ENCODE measurements at regions of chr7 and their contacts with region 1.

Region 1: DNA sequence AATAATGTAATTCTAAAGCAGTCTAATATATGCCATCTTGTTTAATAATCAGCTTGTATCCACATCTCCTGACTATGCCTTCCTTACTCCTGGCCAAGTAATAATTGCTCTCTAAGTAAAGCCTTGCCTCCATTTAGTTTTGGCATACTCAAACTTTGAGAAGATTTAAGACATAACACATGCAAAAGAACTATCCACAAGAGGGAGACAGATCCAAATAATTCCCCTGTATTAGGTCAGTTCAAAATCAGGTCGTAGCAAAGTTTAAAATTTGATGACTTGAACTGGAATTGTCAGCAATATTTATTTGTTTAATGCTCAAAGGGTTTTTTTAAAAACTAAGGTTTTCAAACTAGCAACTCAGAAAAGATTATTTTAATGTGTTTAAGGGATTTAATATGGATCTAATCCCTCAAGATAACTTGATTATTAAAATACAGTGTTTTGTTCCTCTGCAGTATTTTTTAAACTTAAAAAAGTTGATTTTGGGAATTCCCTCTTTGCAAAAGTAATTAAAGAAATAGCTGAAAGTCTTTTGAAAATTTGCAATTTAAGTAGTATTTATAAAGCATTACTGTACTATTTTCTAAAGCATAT is 95.3 kb downstream of the HDAC9 start:
- DNase-seq: peak; percentile 59
- H3K4me3 ChIP-seq: no peak overlapping the region
- H3K27ac ChIP-seq: no peak overlapping the region
- H3K4me1 ChIP-seq: no peaks in the 10 kb centered on the region
- H3K27me3 ChIP-seq: no peaks in the 10 kb centered on the region
- CTCF ChIP-seq: peak; percentile 30 to 38
- POLR2A ChIP-seq: no peak

Region 2: GRCh38 chr7:18508443-18509427 is 82.1 kb before region 1 on chr7:
- CTCF ChIA-PET with region 1: no interaction called
- POLR2A ChIA-PET with region 1: no interaction called
- dilution Hi-C with region 1: no loop called
- intact Hi-C with region 1: no loop called
- DNase-seq: peak; percentile 93
- H3K4me3 ChIP-seq: peak overlapping the region in 1 of 3 experiments; percentile 64
- H3K27ac ChIP-seq: peak overlapping the region; percentile 94
- H3K4me1 ChIP-seq: peaks cover 31% of the 10 kb centered on the region
- H3K27me3 ChIP-seq: no peaks in the 10 kb centered on the region
- CTCF ChIP-seq: no peak
- POLR2A ChIP-seq: no peak

Region 3: GRCh38 chr7:18610331-18610948 is 19.6 kb after region 1 on chr7:
- CTCF ChIA-PET with region 1: interaction called, 16 read pairs
- POLR2A ChIA-PET with region 1: no interaction called
- dilution Hi-C with region 1: no loop called
- intact Hi-C with region 1: no loop called
- DNase-seq: peak; percentile 38
- H3K4me3 ChIP-seq: no peak overlapping the region
- H3K27ac ChIP-seq: no peak overlapping the region
- H3K4me1 ChIP-seq: no peaks in the 10 kb centered on the region
- H3K27me3 ChIP-seq: no peaks in the 10 kb centered on the region
- CTCF ChIP-seq: peak; percentile 52 to 66
- POLR2A ChIP-seq: no peak

Region 4: GRCh38 chr7:18680576-18680975 is 89.7 kb after region 1 on chr7:
- CTCF ChIA-PET with region 1: no interaction called
- POLR2A ChIA-PET with region 1: no interaction called
- dilution Hi-C with region 1: no loop called
- intact Hi-C with region 1: no loop called
- DNase-seq: no peak
- H3K4me3 ChIP-seq: no peak overlapping the region
- H3K27ac ChIP-seq: no peak overlapping the region
- H3K4me1 ChIP-seq: no peaks in the 10 kb centered on the region
- H3K27me3 ChIP-seq: peaks cover 0 to 1% of the 10 kb centered on the region in 2 experiments
- CTCF ChIP-seq: no peak
- POLR2A ChIP-seq: no peak

Region 5: GRCh38 chr7:18693406-18693805 is 102.6 kb after region 1 on chr7:
- CTCF ChIA-PET with region 1: no interaction called
- POLR2A ChIA-PET with region 1: no interaction called
- dilution Hi-C with region 1: no loop called
- intact Hi-C with region 1: no loop called
- DNase-seq: peak; percentile 64
- H3K4me3 ChIP-seq: no peak overlapping the region
- H3K27ac ChIP-seq: no peak overlapping the region
- H3K4me1 ChIP-seq: no peaks in the 10 kb centered on the region
- H3K27me3 ChIP-seq: no peaks in the 10 kb centered on the region
- CTCF ChIP-seq: peak; percentile 34 to 59
- POLR2A ChIP-seq: no peak

Region 6: GRCh38 chr7:19051767-19052375 is 461.0 kb after region 1 on chr7:
- CTCF ChIA-PET with region 1: interaction called, 11 read pairs
- POLR2A ChIA-PET with region 1: no interaction called
- dilution Hi-C with region 1: no loop called
- intact Hi-C with region 1: loop called (anchors 1 kb)
- DNase-seq: peak; percentile 42
- H3K4me3 ChIP-seq: no peak overlapping the region
- H3K27ac ChIP-seq: no peak overlapping the region
- H3K4me1 ChIP-seq: no peaks in the 10 kb centered on the region
- H3K27me3 ChIP-seq: no peaks in the 10 kb centered on the region
- CTCF ChIP-seq: peak; percentile 63 to 66
- POLR2A ChIP-seq: no peak

Region 7: DNA sequence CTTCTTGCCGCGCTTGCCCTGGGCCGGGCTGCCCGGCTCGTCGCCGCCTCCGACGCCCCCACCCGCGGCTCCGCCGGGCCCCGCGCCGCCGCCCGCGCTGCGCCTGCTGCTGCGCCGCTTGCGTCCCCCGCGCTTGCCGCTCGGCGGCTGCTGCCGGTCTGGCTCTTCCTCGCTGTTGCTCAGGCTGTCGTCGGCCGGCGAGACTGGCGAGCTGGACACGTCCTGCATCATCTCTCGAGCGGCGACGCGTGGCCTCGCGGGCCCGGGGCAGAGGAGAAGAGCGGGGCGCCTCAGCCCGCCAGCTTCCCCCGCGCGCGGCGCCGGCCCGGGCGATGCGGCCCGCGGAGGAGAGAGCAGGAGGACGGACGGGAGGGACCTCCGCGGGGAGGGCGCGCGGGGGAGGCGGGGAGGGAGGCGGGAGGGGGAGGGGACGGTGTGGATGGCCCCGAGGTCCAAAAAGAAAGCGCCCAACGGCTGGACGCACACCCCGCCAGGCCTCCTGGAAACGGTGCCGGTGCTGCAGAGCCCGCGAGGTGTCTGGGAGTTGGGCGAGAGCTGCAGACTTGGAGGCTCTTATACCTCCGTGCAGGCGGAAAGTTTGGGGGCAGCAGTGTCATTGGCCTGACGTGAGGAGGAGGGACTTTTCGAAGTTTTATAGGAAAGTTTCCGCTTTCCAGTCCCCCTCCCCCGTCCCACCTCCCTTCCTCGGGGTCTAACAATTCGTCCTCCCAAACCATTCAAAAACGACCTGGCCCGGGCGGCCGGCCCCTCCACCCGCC is 526.4 kb after region 1 on chr7 and contains the start of gene TWIST1:
- CTCF ChIA-PET with region 1: interaction called, 12 read pairs
- POLR2A ChIA-PET with region 1: no interaction called
- dilution Hi-C with region 1: no loop called
- intact Hi-C with region 1: loop called (anchors 5 kb)
- DNase-seq: no peak
- H3K4me3 ChIP-seq: peak within 1 kb of the TSS in 2 of 3 experiments; percentile 22 to 37
- H3K27ac ChIP-seq: no peak within 1 kb of the TSS
- H3K4me1 ChIP-seq: peaks cover 13% of the 10 kb centered on the region
- H3K27me3 ChIP-seq: peaks cover 70 to 94% of the 10 kb centered on the region in 2 experiments
- CTCF ChIP-seq: no peak
- POLR2A ChIP-seq: no peak
- total RNA-seq, gene TWIST1: not detected in 2 replicates

Region 8: GRCh38 chr7:19442016-19442785 is 851.4 kb after region 1 on chr7:
- CTCF ChIA-PET with region 1: no interaction called
- POLR2A ChIA-PET with region 1: no interaction called
- dilution Hi-C with region 1: no loop called
- intact Hi-C with region 1: loop called (anchors 5 kb)
- DNase-seq: peak; percentile 30
- H3K4me3 ChIP-seq: no peak overlapping the region
- H3K27ac ChIP-seq: no peak overlapping the region
- H3K4me1 ChIP-seq: no peaks in the 10 kb centered on the region
- H3K27me3 ChIP-seq: peaks cover 0 to 3% of the 10 kb centered on the region in 2 experiments
- CTCF ChIP-seq: peak; percentile 20 to 21
- POLR2A ChIP-seq: no peak

Region 9: GRCh38 chr7:19491821-19492452 is 901.1 kb after region 1 on chr7:
- CTCF ChIA-PET with region 1: interaction called, 19 read pairs
- POLR2A ChIA-PET with region 1: no interaction called
- dilution Hi-C with region 1: no loop called
- intact Hi-C with region 1: no loop called
- DNase-seq: peak; percentile 54
- H3K4me3 ChIP-seq: no peak overlapping the region
- H3K27ac ChIP-seq: no peak overlapping the region
- H3K4me1 ChIP-seq: no peaks in the 10 kb centered on the region
- H3K27me3 ChIP-seq: no peaks in the 10 kb centered on the region
- CTCF ChIP-seq: peak; percentile 30 to 37
- POLR2A ChIP-seq: no peak

Region 10: GRCh38 chr7:19665399-19666008 is 1074.7 kb after region 1 on chr7:
- CTCF ChIA-PET with region 1: interaction called, 15 read pairs
- POLR2A ChIA-PET with region 1: no interaction called
- dilution Hi-C with region 1: no loop called
- intact Hi-C with region 1: loop called (anchors 5 kb)
- DNase-seq: peak; percentile 31
- H3K4me3 ChIP-seq: no peak overlapping the region
- H3K27ac ChIP-seq: no peak overlapping the region
- H3K4me1 ChIP-seq: no peaks in the 10 kb centered on the region
- H3K27me3 ChIP-seq: peaks cover 2 to 11% of the 10 kb centered on the region in 2 experiments
- CTCF ChIP-seq: peak in 1 of 2 donors; percentile 32
- POLR2A ChIP-seq: no peak

Measured in endothelial cell of umbilical vein (primary cell).